Activated CD8-positive, alpha-beta T cell treated with anti-CD3 and anti-CD28 coated beads, Interleukin-2, amount 10 ng/mL, durations not matched to agents 7 days and 5 days (primary cell): ENCODE measurements at regions of chr7 and their contacts with region 1.

Region 1: DNA sequence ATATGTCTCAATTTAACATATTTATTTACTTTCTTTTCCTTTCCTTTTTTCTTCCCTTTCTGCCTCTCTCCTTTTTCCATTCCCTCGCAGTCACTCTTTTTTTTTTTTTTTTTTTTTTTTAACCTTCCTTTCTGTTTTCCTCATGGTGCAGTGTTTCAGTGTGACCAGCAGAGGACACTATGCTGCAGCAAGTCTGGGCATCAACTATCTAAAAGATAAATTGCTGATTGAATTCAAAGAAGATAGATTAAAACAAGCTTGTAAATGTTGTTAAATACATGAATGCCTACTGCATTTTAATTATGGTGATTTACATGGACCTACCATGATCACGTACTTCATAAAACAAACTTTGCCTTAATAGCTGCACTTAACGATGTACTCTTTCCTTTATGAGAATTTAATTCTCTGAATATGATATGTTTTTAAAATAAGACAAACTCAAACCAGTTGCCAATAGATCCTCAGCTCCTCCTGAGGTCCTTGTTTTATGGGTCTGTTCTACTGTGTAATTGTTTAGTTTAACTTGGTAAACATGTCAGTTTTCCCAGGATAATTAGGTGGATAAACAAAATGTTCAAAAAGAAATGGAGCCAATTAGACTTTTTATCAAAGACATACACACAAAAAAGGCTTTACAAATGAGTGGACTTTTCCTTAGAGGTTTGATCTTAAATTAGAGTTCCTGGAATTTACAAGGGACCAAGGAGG is 101.0 kb upstream of the AGR3 start:
- DNase-seq: peak; percentile 53
- ATAC-seq: no peak
- H3K4me3 Mint-ChIP-seq: peak overlapping the region; percentile 27
- H3K27ac Mint-ChIP-seq: no peak overlapping the region
- H3K4me1 Mint-ChIP-seq: peaks cover 13% of the 10 kb centered on the region
- H3K27me3 Mint-ChIP-seq: peaks cover 30% of the 10 kb centered on the region

Region 2: DNA sequence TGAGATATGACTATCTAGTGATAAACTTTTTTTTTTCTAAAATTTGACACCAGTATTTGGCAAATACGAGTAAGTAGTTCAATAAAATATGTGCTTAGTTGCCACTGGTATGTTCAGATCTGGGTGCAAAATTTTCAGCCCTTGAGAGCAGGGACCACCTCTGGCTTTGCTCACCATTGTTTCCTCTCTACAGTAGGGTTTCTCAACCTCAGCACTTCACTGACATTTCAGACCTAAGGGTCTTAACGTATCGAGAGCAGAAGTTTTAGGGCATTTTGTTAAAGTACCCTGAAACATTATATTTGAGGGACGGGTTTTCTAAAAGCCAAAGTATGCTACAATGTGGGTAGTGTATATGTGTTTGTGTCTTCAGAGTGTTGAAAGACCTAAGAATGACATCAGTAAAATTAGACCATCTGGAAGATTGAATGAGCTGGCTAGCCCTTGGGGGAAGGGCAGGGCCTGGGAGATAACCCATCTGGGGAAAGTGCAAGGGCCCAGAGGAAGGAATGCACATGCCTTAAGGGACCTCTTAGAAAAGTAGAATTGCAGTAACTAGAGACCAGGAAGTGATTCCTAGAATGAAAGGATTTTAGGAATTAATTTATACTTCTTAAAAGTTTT is 325.0 kb before region 1 on chr7:
- CTCF ChIA-PET with region 1: no interaction called
- POLR2A ChIA-PET with region 1: no interaction called
- DNase-seq: no peak
- ATAC-seq: no peak
- H3K4me3 Mint-ChIP-seq: no peak overlapping the region
- H3K27ac Mint-ChIP-seq: no peak overlapping the region
- H3K4me1 Mint-ChIP-seq: peaks cover 21% of the 10 kb centered on the region
- H3K27me3 Mint-ChIP-seq: no peaks in the 10 kb centered on the region

Region 3: GRCh38 chr7:16905300-16906044 is 77.3 kb before region 1 on chr7:
- CTCF ChIA-PET with region 1: no interaction called
- POLR2A ChIA-PET with region 1: no interaction called
- DNase-seq: no peak
- ATAC-seq: no peak
- H3K4me3 Mint-ChIP-seq: no peak overlapping the region
- H3K27ac Mint-ChIP-seq: no peak overlapping the region
- H3K4me1 Mint-ChIP-seq: no peaks in the 10 kb centered on the region
- H3K27me3 Mint-ChIP-seq: peaks cover 10% of the 10 kb centered on the region

Region 4: GRCh38 chr7:16926283-16926682 is 56.5 kb before region 1 on chr7:
- CTCF ChIA-PET with region 1: interaction called, 11 read pairs
- POLR2A ChIA-PET with region 1: no interaction called
- DNase-seq: peak; percentile 57
- ATAC-seq: peak; percentile 65
- H3K4me3 Mint-ChIP-seq: no peak overlapping the region
- H3K27ac Mint-ChIP-seq: no peak overlapping the region
- H3K4me1 Mint-ChIP-seq: peaks cover 54% of the 10 kb centered on the region
- H3K27me3 Mint-ChIP-seq: no peaks in the 10 kb centered on the region

Region 5: GRCh38 chr7:17043012-17043877 is 60.5 kb after region 1 on chr7:
- CTCF ChIA-PET with region 1: interaction called, 10 read pairs
- POLR2A ChIA-PET with region 1: no interaction called
- DNase-seq: no peak
- ATAC-seq: peak; percentile 31
- H3K4me3 Mint-ChIP-seq: no peak overlapping the region
- H3K27ac Mint-ChIP-seq: no peak overlapping the region
- H3K4me1 Mint-ChIP-seq: peaks cover 47% of the 10 kb centered on the region
- H3K27me3 Mint-ChIP-seq: peaks cover 4% of the 10 kb centered on the region

Region 6: DNA sequence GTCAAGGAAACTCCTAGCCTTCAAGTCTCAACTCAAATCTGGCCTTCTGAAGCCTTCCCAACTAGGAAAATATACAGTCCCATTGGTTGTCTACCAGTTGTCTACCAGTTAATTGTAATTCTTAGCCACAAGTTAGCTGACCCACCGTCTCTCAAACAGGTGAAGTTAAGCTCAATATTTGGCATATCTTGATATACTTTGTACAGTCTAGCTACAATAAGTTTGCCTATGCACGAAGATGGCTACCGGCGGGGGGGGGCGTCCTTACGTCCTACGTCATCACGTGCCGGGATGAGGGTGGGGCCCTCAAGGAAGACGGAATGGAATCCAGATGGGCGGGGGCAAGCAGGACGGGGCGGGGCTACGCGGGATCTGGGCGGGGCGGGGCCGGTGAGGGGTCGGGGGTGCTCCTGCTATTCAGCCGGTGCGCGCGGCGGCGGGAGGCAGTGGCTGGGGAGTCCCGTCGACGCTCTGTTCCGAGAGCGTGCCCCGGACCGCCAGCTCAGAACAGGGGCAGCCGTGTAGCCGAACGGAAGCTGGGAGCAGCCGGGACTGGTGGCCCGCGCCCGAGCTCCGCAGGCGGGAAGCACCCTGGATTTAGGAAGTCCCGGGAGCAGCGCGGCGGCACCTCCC is 315.5 kb after region 1 on chr7 and contains the start of gene AHR:
- CTCF ChIA-PET with region 1: interaction called, 32 read pairs
- POLR2A ChIA-PET with region 1: interaction called, 4 read pairs
- DNase-seq: peak; percentile 95
- ATAC-seq: peak; percentile 82
- H3K4me3 Mint-ChIP-seq: peak within 1 kb of the TSS; percentile 94
- H3K27ac Mint-ChIP-seq: peak within 1 kb of the TSS; percentile 96
- H3K4me1 Mint-ChIP-seq: peaks cover 23% of the 10 kb centered on the region
- H3K27me3 Mint-ChIP-seq: no peaks in the 10 kb centered on the region
- total RNA-seq, gene AHR: 39.0 to 43.7 TPM

Region 7: GRCh38 chr7:17304926-17305325 is 322.1 kb after region 1 on chr7:
- CTCF ChIA-PET with region 1: interaction called, 32 read pairs
- POLR2A ChIA-PET with region 1: no interaction called
- DNase-seq: no peak
- ATAC-seq: peak; percentile 39
- H3K4me3 Mint-ChIP-seq: no peak overlapping the region
- H3K27ac Mint-ChIP-seq: no peak overlapping the region
- H3K4me1 Mint-ChIP-seq: peaks cover 30% of the 10 kb centered on the region
- H3K27me3 Mint-ChIP-seq: no peaks in the 10 kb centered on the region

Region 8: GRCh38 chr7:17530741-17531417 is 548.1 kb after region 1 on chr7:
- CTCF ChIA-PET with region 1: interaction called, 11 read pairs
- POLR2A ChIA-PET with region 1: no interaction called
- DNase-seq: no peak
- ATAC-seq: no peak
- H3K4me3 Mint-ChIP-seq: no peak overlapping the region
- H3K27ac Mint-ChIP-seq: no peak overlapping the region
- H3K4me1 Mint-ChIP-seq: peaks cover 15% of the 10 kb centered on the region
- H3K27me3 Mint-ChIP-seq: peaks cover 13% of the 10 kb centered on the region

Region 9: GRCh38 chr7:17680943-17681351 is 698.2 kb after region 1 on chr7:
- CTCF ChIA-PET with region 1: interaction called, 10 read pairs
- POLR2A ChIA-PET with region 1: no interaction called
- DNase-seq: no peak
- ATAC-seq: no peak
- H3K4me3 Mint-ChIP-seq: no peak overlapping the region
- H3K27ac Mint-ChIP-seq: no peak overlapping the region
- H3K4me1 Mint-ChIP-seq: no peaks in the 10 kb centered on the region
- H3K27me3 Mint-ChIP-seq: peaks cover 4% of the 10 kb centered on the region